ENCODE measurements at regions of chr14 and their contacts with region 1.

Region 1: GRCh38 chr14:55102141-55102621 is 26.9 kb upstream of the LGALS3 start:
- DNase-seq: peak in 4 of 9 donors; percentile 7 to 43 (median 10)
- ATAC-seq: peak; percentile 81
- H3K4me3 ChIP-seq: no peak overlapping the region
- H3K4me3 Mint-ChIP-seq: peak overlapping the region in 5 of 10 donors; percentile 25 to 66 (median 40)
- H3K27ac ChIP-seq: peak overlapping the region; percentile 41
- H3K27ac Mint-ChIP-seq: peak overlapping the region; percentile 26 to 97 (median 82)
- H3K4me1 ChIP-seq: peaks cover 10 to 45% of the 10 kb centered on the region in 2 donors
- H3K4me1 Mint-ChIP-seq: peaks cover 28 to 56% (median 32%) of the 10 kb centered on the region in 7 donors
- H3K27me3 ChIP-seq: no peaks in the 10 kb centered on the region
- H3K27me3 Mint-ChIP-seq: no peaks in the 10 kb centered on the region

Region 2: GRCh38 chr14:55142466-55142865 is 40.3 kb after region 1 on chr14:
- CTCF ChIA-PET with region 1: no interaction called
- POLR2A ChIA-PET with region 1: no interaction called
- intact Hi-C with region 1: loop called in 1 of 2 experiments (anchors 5 kb)
- DNase-seq: no peak
- ATAC-seq: no peak
- H3K4me3 ChIP-seq: no peak overlapping the region
- H3K4me3 Mint-ChIP-seq: no peak overlapping the region
- H3K27ac ChIP-seq: no peak overlapping the region
- H3K27ac Mint-ChIP-seq: no peak overlapping the region
- H3K4me1 ChIP-seq: no peaks in the 10 kb centered on the region
- H3K4me1 Mint-ChIP-seq: peaks cover 0 to 29% (median 0%) of the 10 kb centered on the region in 7 donors
- H3K27me3 ChIP-seq: no peaks in the 10 kb centered on the region
- H3K27me3 Mint-ChIP-seq: no peaks in the 10 kb centered on the region

Region 3: DNA sequence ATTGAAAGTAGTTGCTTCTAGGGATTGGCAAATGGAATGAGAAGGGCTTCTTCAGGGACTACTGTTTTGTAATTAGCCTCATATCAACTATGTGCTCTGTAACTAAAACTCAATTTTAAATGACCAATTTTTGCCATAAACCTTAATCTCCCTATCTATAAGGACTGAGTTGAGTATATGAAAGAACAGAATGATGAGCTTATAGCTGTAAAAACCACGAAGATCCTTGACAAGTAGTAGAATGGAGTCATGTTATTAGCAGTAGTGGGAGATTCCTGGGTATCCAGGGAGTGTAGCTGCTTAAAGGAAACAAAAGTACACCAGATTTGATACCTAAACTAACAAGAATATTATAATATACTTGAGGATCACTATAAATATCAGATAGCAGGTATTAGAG is 54.9 kb after region 1 on chr14:
- CTCF ChIA-PET with region 1: no interaction called
- POLR2A ChIA-PET with region 1: no interaction called
- intact Hi-C with region 1: no loop called
- DNase-seq: no peak
- ATAC-seq: no peak
- H3K4me3 ChIP-seq: no peak overlapping the region
- H3K4me3 Mint-ChIP-seq: no peak overlapping the region
- H3K27ac ChIP-seq: no peak overlapping the region
- H3K27ac Mint-ChIP-seq: no peak overlapping the region
- H3K4me1 ChIP-seq: no peaks in the 10 kb centered on the region
- H3K4me1 Mint-ChIP-seq: peaks cover 0 to 15% (median 0%) of the 10 kb centered on the region in 7 donors
- H3K27me3 ChIP-seq: no peaks in the 10 kb centered on the region
- H3K27me3 Mint-ChIP-seq: peaks cover 0 to 4% (median 0%) of the 10 kb centered on the region in 5 donors

Measured in naive thymus-derived CD4-positive, alpha-beta T cell (primary cell).